ENCODE measurements at regions of chr3 and their contacts with region 1.

Region 1: GRCh38 chr3:27449530-27450150 is 34.5 kb downstream of the SLC4A7 start:
- DNase-seq: no peak
- ATAC-seq: no peak
- H3K4me3 ChIP-seq: no peak overlapping the region
- H3K4me3 Mint-ChIP-seq: no peak overlapping the region
- H3K27ac ChIP-seq: no peak overlapping the region
- H3K27ac Mint-ChIP-seq: no peak overlapping the region
- H3K4me1 ChIP-seq: peaks cover 0 to 3% of the 10 kb centered on the region in 2 experiments
- H3K4me1 Mint-ChIP-seq: peaks cover 32 to 35% (median 35%) of the 10 kb centered on the region in 3 donors
- H3K27me3 ChIP-seq: no peaks in the 10 kb centered on the region
- H3K27me3 Mint-ChIP-seq: no peaks in the 10 kb centered on the region

Region 2: DNA sequence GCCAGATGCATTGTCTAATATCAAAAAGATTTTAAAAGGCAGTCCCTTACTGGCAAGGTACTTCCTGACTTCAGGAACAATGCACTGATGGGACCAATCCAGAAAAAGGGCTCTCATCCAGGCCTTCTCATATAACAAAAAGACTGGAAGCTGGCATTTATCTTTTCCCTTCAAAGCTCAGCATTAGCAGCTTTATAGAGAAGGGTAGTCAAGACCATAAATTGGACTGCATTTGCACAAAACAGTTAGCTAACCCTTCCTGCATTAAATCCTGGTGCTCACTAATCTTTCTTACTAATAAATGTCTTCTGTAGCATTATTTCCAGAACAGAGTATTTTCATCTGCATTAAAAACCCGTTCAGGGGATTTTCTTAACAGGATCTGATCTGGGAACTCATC is 34.4 kb before region 1 on chr3:
- CTCF ChIA-PET with region 1: no interaction called
- POLR2A ChIA-PET with region 1: no interaction called
- DNase-seq: no peak
- ATAC-seq: no peak
- H3K4me3 ChIP-seq: no peak overlapping the region
- H3K4me3 Mint-ChIP-seq: no peak overlapping the region
- H3K27ac ChIP-seq: no peak overlapping the region
- H3K27ac Mint-ChIP-seq: no peak overlapping the region
- H3K4me1 ChIP-seq: no peaks in the 10 kb centered on the region
- H3K4me1 Mint-ChIP-seq: peaks cover 0 to 12% (median 5%) of the 10 kb centered on the region in 3 donors
- H3K27me3 ChIP-seq: no peaks in the 10 kb centered on the region
- H3K27me3 Mint-ChIP-seq: no peaks in the 10 kb centered on the region

Region 3: GRCh38 chr3:27827041-27827440 is 377.4 kb after region 1 on chr3:
- CTCF ChIA-PET with region 1: no interaction called
- POLR2A ChIA-PET with region 1: interaction called in 1 of 2 experiments, 13 read pairs
- DNase-seq: no peak
- ATAC-seq: no peak
- H3K4me3 ChIP-seq: no peak overlapping the region
- H3K4me3 Mint-ChIP-seq: no peak overlapping the region
- H3K27ac ChIP-seq: no peak overlapping the region
- H3K27ac Mint-ChIP-seq: no peak overlapping the region
- H3K4me1 ChIP-seq: peaks cover 0 to 3% of the 10 kb centered on the region in 2 experiments
- H3K4me1 Mint-ChIP-seq: peaks cover 15% of the 10 kb centered on the region in 3 donors
- H3K27me3 ChIP-seq: no peaks in the 10 kb centered on the region
- H3K27me3 Mint-ChIP-seq: no peaks in the 10 kb centered on the region

Measured in T-cell (primary cell).